H1 (cell line): ENCODE measurements at regions of chr20 and their contacts with region 1.

Region 1: DNA sequence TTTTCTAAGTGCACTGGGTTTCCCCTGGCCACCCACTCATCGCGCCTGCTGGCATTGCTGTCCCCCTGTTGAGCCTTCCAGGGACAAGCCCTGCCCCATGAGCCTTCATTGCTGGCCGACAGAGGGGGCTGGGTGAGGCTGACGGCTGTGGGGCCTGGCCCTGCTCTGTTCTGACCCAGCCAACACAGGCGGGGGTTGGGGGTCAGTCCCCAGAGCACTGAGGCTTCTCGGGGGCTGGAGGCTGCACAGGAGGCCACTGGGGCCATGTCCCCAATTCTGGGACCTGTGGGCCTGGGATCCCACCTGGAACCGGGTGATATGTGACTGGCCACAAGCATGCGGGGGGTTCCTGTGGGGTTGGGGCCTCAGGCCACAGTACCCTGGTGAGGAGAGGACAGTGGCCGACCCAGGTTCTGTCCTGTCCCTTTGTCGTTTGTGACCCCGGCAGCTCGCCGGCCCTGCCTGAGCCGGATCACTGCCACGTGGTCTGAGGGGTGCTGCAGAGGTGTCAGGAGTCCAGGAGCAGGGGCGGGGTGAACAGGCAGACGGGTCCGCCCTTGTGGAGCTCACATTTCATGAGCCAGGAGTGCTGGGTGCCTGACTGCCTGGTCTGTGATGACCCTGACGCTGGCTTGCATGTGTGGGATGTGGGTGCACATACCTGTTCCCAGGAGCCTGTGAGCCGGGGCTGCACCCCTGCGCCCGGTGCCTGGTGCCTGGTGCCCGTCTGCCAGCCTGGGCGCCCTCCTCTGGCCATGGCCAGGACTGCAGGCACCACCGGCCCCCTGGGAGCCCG is 2.1 kb upstream of the COL20A1 start:
- DNase-seq: peak; percentile 33 to 98
- H3K4me3 ChIP-seq: no peak overlapping the region
- H3K27ac ChIP-seq: no peak overlapping the region
- H3K4me1 ChIP-seq: peaks cover 0 to 24% (median 17%) of the 10 kb centered on the region in 4 experiments; a peak in 6 of 7 replicates
- H3K27me3 ChIP-seq: peaks cover 0 to 9% (median 0%) of the 10 kb centered on the region in 4 experiments; a peak in 2 of 7 replicates
- CTCF ChIP-seq: peak; percentile 86 to 90 (median 86)
- EP300 ChIP-seq: no peak
- POLR2A ChIP-seq: no peak
- RAD21 ChIP-seq: peak; percentile 61 to 72

Region 2: GRCh38 chr20:63272584-63273579 is 18.0 kb before region 1 on chr20 and contains the start of gene ARFGAP1:
- CTCF ChIA-PET with region 1: interaction called, 17 read pairs
- POLR2A ChIA-PET with region 1: interaction called, 4 read pairs
- DNase-seq: peak in 1 of 2 experiments; percentile 93
- H3K4me3 ChIP-seq: peak within 1 kb of the TSS; percentile 66 to 95 (median 87)
- H3K27ac ChIP-seq: no peak within 1 kb of the TSS; the same call in 1 of the 2 replicates
- H3K4me1 ChIP-seq: peaks cover 0 to 7% (median 1%) of the 10 kb centered on the region in 4 experiments; a peak in 5 of 7 replicates
- H3K27me3 ChIP-seq: 0 out of 7 replicates have a peak, but pooled peaks cover 0 to 2% (median 0%) of the 10 kb centered on the region in 4 experiments
- CTCF ChIP-seq: no peak
- EP300 ChIP-seq: no peak
- POLR2A ChIP-seq: peak in 1 of 2 experiments; percentile 79; a peak in 2 of 3 replicates
- RAD21 ChIP-seq: no peak
- total RNA-seq, gene ARFGAP1: 93.0 and 100 TPM in 2 replicates

Region 3: DNA sequence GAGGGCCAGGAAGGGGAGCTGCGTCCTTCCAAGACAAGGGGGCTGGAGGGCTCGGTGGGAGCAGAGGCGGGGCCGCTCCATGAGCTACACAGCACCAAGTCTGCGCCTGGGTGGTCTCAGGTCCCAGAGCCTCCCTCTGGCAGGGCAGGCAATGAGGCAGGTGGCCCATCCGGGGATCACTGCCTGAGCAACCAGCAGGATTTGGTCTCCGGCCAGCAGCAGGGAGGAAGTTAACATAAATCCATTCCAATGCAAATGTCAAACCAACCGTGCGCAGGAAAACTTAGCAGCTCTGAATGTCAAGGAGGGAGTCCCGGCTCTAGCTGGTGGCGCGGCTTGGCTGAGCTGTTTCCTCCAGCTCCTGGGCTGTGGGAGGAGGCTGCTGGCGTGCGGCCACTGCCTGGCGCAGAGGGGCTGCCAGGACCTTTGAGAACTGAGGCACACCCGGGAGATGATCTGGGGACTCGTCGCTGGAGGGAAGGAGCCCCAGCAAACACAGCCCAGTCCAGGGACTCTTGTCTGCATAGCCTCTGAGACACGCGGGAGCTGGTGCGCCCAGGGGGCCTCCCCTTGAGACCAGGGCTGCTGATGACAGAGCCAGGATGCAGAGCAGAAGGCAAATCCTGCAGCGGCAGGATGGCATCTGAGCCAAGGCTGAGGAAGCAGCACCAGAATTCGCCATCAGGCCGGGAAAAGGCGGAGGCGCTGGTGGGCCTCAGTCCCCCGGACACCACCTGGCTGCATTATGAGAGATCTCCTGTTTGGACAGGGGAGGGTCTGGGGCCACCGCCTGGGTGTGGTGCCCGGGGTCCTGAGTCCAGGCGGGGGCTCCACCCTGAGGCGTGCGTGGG is 103.4 kb after region 1 on chr20:
- CTCF ChIA-PET with region 1: interaction called, 10 read pairs
- POLR2A ChIA-PET with region 1: no interaction called
- DNase-seq: peak in 1 of 2 experiments; percentile 41
- H3K4me3 ChIP-seq: peak overlapping the region in 1 of 4 experiments; percentile 12; a peak in 3 of 8 replicates
- H3K27ac ChIP-seq: no peak overlapping the region
- H3K4me1 ChIP-seq: peaks cover 0 to 19% (median 18%) of the 10 kb centered on the region in 4 experiments; a peak in 6 of 7 replicates
- H3K27me3 ChIP-seq: peaks cover 0 to 3% (median 0%) of the 10 kb centered on the region in 4 experiments; a peak in 1 of 7 replicates
- CTCF ChIP-seq: no peak
- EP300 ChIP-seq: no peak
- POLR2A ChIP-seq: no peak
- RAD21 ChIP-seq: no peak